ENCODE measurements at regions of chr4 and their contacts with region 1.

Region 1: GRCh38 chr4:6963139-6963611 is 53.5 kb downstream of the TBC1D14 start:
- DNase-seq: no peak
- ATAC-seq: peak; percentile 28
- H3K4me3 Mint-ChIP-seq: peak overlapping the region; percentile 83
- H3K27ac Mint-ChIP-seq: peak overlapping the region; percentile 87
- H3K4me1 Mint-ChIP-seq: peaks cover 51% of the 10 kb centered on the region
- H3K27me3 Mint-ChIP-seq: no peaks in the 10 kb centered on the region
- CTCF ChIP-seq: no peak

Region 2: GRCh38 chr4:6909073-6909965 is 53.9 kb before region 1 on chr4 and contains the start of gene TBC1D14:
- CTCF ChIA-PET with region 1: interaction called, 3 read pairs
- POLR2A ChIA-PET with region 1: interaction called, 12 read pairs
- intact Hi-C with region 1: loop called (anchors 2 kb)
- DNase-seq: peak; percentile 88
- ATAC-seq: peak; percentile 89
- H3K4me3 Mint-ChIP-seq: peak within 1 kb of the TSS; percentile 87
- H3K27ac Mint-ChIP-seq: peak within 1 kb of the TSS; percentile 86
- H3K4me1 Mint-ChIP-seq: peaks cover 43% of the 10 kb centered on the region
- H3K27me3 Mint-ChIP-seq: peaks cover 5% of the 10 kb centered on the region
- CTCF ChIP-seq: no peak
- total RNA-seq, gene TBC1D14: 35.1 and 35.2 TPM in 2 replicates

Region 3: DNA sequence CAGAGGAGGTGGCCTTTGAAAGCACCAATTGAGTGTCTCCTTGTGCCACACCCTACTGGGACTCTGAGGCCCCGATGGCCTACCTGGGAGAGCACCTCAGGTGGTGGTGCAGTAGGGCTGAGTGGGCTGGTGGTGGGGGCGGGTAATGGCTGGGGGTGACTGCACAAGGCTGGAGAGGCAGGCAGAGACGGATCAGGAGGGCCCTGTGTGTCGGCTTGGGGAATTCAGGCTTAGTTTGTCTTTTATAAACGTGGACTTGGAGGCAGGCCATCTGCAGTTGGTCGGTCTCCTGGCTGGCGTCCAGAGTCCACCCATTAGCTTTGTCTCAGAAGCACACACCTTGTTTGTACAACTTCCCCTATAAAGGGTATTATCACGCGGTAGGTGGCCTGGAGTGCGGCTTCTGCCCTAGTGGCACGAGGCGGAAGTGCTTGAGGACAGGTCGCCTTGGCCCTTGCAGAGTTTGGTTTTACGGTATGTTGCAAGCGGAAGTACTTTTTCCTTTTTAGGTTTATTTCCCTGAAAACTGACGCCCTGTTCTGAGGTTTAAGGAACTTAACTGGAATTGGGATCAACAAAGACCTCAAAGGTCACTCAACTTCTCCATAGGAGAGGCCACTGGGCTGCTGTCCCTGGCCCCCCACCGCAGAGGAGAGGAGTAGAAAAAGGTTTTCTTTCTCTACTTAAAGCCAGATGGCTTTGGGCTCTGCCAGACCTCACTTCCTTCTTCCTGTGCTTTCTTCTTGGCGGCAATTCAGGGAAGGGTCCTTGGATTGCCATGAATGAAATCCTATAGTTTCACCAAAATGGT is 45.5 kb before region 1 on chr4:
- CTCF ChIA-PET with region 1: interaction called, 4 read pairs
- POLR2A ChIA-PET with region 1: interaction called, 5 read pairs
- intact Hi-C with region 1: loop called (anchors 2 kb)
- DNase-seq: peak; percentile 34
- ATAC-seq: peak; percentile 91
- H3K4me3 Mint-ChIP-seq: peak overlapping the region; percentile 53
- H3K27ac Mint-ChIP-seq: peak overlapping the region; percentile 76
- H3K4me1 Mint-ChIP-seq: peaks cover 44% of the 10 kb centered on the region
- H3K27me3 Mint-ChIP-seq: no peaks in the 10 kb centered on the region
- CTCF ChIP-seq: no peak

Region 4: DNA sequence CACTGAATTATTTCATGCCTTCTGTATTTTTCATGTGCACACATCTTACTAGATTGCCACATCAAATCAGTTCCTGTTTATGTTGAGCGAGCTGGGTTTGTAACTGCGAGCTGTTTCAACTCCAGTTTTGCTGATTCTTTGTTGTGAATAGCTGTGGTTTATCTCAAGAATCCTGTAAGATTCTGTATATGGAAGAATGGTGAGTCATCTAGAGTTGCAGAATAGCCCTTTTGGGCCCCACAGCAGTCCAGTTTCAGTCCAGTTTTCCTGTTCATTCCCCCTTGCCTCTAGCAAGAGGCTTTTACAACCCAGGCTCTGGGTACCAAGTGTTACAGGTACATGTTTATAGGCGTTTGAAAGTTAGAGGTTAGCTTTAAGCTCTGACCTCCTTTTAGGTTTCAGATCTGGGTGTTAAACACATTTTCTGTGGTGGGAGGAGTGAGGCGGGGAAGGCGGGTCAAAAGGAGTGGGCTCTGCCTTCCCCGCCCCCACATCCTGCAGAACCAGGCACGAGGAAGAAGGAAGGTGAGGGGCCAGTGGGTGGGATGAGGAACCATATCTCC is 20.9 kb before region 1 on chr4:
- CTCF ChIA-PET with region 1: no interaction called
- POLR2A ChIA-PET with region 1: interaction called, 5 read pairs
- intact Hi-C with region 1: loop called (anchors 1 kb)
- DNase-seq: no peak
- ATAC-seq: no peak
- H3K4me3 Mint-ChIP-seq: peak overlapping the region; percentile 32
- H3K27ac Mint-ChIP-seq: peak overlapping the region; percentile 73
- H3K4me1 Mint-ChIP-seq: peaks cover 62% of the 10 kb centered on the region
- H3K27me3 Mint-ChIP-seq: no peaks in the 10 kb centered on the region
- CTCF ChIP-seq: no peak

Region 5: GRCh38 chr4:6974138-6974848 is 11.1 kb after region 1 on chr4:
- CTCF ChIA-PET with region 1: interaction called, 7 read pairs
- POLR2A ChIA-PET with region 1: interaction called, 6 read pairs
- intact Hi-C with region 1: loop called (anchors 1 kb)
- DNase-seq: peak; percentile 66
- ATAC-seq: peak; percentile 95
- H3K4me3 Mint-ChIP-seq: no peak overlapping the region
- H3K27ac Mint-ChIP-seq: no peak overlapping the region
- H3K4me1 Mint-ChIP-seq: peaks cover 32% of the 10 kb centered on the region
- H3K27me3 Mint-ChIP-seq: no peaks in the 10 kb centered on the region
- CTCF ChIP-seq: peak; percentile 39

Region 6: DNA sequence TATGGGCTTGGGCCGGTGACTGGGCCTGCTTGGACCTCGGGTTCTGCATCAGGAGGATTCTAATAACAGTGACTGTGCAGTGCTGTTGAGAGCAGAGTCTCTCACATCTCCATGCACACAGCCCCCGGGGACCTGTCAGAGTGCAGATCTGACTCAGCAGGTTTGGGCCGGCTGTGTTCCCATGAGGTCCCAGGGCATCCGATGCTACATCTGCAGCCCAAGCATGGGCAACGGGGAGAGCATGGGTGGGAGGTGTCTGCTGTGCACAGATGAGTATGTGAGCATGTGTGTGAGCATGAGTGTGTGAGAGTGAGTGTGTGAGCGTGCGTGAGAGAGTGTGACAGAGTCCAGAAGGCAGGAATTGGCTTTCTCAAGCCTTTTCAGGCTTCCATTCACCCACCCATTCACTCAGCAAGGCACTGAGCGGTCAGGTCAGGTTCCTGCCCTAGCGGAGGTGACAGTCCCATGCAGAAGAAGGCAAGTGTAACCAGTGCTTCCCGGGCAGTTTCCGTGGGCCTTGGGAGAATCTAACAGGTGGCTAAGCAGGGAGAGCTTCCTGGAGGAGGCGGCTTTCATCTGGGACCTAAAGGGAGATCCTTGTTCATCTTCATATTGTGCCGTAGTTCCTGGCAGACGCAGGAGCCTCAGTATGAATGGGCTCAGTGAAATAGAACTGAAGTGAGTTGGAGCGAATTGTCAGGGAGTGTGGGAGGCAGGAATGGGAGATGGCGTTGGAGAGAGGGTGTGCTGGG is 291.7 kb after region 1 on chr4:
- CTCF ChIA-PET with region 1: no interaction called
- POLR2A ChIA-PET with region 1: no interaction called
- intact Hi-C with region 1: no loop called
- DNase-seq: no peak
- ATAC-seq: peak; percentile 92
- H3K4me3 Mint-ChIP-seq: no peak overlapping the region
- H3K27ac Mint-ChIP-seq: no peak overlapping the region
- H3K4me1 Mint-ChIP-seq: peaks cover 5% of the 10 kb centered on the region
- H3K27me3 Mint-ChIP-seq: peaks cover 23% of the 10 kb centered on the region
- CTCF ChIP-seq: no peak

Measured in activated B cell treated with CpG ODN at 0.5 μM for 24 hours (primary cell).